ENCODE measurements at regions of chr7 and their contacts with region 1.

Region 1: DNA sequence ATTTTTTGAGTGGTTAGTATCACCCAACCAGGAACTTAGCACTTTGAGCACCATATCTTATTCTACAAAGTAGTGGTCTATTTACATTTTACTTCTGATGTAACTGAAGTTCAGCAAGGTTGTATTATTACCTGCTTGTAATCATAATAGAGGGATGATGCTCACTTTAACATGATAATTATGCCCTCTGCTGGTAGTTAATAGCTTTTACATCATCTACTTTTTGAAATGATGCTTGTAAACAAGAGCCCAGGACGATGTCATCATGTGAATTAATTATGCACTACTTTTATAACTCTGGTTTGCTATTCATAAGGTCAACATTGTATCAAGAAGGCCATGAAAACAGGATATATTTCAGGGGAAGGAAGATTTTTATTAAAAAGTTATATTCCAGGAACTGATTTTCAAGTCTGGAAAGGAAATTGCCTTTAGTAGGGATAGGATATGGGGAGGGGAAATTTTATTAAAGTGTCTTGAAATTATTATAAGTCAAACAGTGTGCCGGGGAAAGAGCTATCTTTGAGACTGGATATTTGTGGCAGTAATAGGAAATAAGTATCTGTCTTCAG is 80.3 kb upstream of the SCIN start:
- DNase-seq: no peak
- H3K4me3 ChIP-seq: no peak overlapping the region
- CTCF ChIP-seq: no peak
- POLR2A ChIP-seq: no peak

Region 2: GRCh38 chr7:11437987-11438386 is 1052.2 kb before region 1 on chr7:
- intact Hi-C with region 1: loop called (anchors 10 kb)
- DNase-seq: no peak
- H3K4me3 ChIP-seq: no peak overlapping the region
- CTCF ChIP-seq: no peak
- POLR2A ChIP-seq: no peak

Region 3: DNA sequence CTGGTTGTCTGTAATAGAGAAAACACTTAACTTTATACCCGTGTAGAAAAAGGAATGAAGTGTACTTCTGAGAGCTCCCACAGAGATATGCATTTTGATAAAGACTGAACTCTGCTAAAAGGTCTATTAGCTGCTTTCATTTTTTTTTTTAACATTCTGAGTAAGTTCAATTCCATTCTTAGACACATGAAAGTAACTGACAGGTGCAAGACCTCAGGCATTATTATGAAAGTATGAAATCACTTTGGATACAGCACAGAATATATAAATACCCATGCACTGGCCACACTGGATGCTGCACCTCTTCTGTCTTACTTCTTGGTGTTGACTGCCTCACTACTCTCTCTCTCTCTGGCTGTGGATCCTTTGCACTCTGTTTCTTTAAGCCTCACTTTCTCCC is 132.7 kb before region 1 on chr7:
- intact Hi-C with region 1: no loop called
- DNase-seq: no peak
- H3K4me3 ChIP-seq: no peak overlapping the region
- CTCF ChIP-seq: no peak
- POLR2A ChIP-seq: no peak

Measured in lower leg skin (tissue), 4 donors.